PC-3 (cell line): ENCODE measurements at regions of chr3 and their contacts with region 1.

Region 1: DNA sequence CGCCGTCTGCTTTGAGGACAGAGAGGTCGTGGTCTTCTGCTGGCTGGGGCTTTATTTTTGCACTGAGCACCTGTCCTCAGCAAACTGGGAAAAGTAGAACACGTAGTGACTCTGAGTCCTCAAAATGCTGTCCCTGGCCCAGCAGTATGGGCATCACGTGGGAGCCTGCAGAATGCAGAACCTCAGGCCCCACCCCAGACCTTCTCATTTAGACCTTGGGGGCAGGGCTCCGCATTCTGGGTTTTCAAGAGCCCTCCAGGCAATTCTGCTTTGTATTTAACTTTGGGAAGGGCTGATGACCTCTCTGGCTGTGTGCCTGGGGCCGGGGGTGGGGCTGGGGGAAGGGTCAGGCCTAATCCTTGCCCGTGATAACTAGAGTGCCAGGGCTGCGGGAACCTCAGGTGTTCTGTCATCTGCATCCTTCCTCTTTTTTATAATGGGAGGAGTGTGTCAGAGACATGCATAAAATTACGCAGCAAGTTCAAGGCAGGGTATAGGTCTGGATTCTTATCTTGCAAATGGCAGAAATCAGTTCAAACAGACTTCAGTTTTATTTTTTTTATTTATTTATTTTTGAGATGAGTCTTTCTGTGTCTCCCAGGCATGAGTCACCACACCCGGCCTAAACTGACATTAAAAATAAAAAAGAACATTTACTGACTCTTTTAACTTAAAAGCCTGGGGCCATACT is 11.1 kb downstream of the SLC6A6 start:
- DNase-seq: peak; percentile 83
- ATAC-seq: peak; percentile 81
- H3K4me3 ChIP-seq: 0 out of 2 replicates have a peak overlapping the region, but pooled peaks have one; percentile 18
- H3K27ac ChIP-seq: peak overlapping the region; percentile 76
- H3K4me1 ChIP-seq: peaks cover 70% of the 10 kb centered on the region
- H3K27me3 ChIP-seq: no peaks in the 10 kb centered on the region
- CTCF ChIP-seq: no peak

Region 2: DNA sequence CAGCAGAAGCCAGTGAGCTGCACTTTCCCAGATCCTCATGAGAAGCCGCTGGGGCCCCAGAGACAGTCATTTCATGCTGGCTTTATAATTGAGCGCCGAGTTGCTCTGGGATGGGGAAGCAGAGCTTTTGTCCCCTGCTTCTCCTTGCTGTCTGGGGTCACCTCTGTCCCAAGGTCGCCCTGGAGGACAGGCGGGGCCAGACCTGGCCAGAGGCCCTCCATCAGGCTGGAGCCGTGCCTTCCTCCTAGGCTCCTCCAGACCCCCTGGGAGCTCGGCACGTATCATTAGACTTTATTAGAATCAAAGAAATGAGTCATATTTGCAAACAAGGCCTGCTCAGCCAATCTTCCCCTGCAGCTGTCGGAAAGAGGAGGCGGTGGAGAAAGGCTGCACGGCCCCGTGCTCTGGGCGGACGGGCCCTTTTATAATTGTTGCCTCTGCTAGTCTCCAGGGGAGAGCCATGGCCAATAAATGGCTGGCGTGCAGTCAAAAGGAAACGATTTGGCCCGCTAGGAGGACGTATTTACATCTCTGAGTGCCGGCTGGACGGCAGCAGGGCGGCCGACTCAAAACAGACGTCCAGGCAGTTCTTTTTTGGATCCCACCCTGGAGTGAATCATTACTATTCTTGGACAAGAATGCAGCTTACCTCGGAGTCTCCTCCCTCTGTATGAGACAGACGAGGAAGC is 39.3 kb after region 1 on chr3:
- CTCF ChIA-PET with region 1: no interaction called
- POLR2A ChIA-PET with region 1: no interaction called
- intact Hi-C with region 1: loop called (anchors 2 kb)
- DNase-seq: peak; percentile 92
- ATAC-seq: peak; percentile 86
- H3K4me3 ChIP-seq: peak overlapping the region; percentile 45
- H3K27ac ChIP-seq: peak overlapping the region; percentile 92
- H3K4me1 ChIP-seq: peaks cover 25% of the 10 kb centered on the region
- H3K27me3 ChIP-seq: no peaks in the 10 kb centered on the region
- CTCF ChIP-seq: no peak